ENCODE measurements at regions of chr18 and their contacts with region 1.

Region 1: DNA sequence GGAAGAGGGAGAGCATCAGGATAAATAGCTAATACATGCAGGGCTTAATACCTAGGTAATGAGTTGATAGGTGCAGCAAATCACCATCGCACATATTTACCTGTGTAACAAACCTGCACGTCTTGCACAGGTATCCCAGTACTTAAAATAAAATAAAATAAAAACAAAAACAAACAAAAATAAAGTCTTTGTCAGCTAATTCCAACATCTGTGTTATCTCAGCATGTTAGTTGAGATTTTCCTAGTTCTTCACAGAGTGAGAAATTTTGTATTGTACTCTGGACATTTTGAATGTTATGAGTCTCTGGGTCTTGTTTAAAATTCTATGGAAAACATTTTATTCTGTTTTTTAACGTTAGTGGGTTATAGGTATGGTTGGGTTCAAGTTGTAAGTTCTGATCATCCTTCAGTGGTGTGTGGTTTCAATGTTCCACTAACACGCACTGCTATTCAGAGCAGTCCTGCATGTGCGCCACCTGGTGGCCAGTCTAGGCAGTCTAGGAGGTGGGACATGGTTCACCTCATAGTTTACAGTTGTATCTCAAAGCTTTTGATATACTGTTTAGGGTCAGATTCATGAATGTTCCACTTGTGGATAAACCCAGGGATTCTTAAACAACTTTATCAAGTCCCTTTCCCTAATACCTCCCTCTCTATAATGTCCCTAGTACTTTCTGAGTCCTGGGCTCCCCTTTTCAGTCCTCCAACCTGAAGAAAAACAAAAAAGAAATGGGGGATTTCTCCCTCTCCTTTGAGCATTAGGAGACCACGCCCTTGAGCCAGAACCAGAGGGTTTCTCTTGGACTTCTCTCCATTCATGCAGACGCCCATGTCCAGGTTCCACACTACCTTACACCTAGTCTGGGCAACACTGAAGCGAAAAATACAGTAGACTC is 213.4 kb upstream of the GATA6 start:
- DNase-seq: peak; percentile 42
- ATAC-seq: peak; percentile 100
- H3K4me3 ChIP-seq: no peak overlapping the region
- H3K27ac ChIP-seq: no peak overlapping the region
- H3K4me1 ChIP-seq: no peaks in the 10 kb centered on the region
- H3K27me3 ChIP-seq: no peaks in the 10 kb centered on the region
- CTCF ChIP-seq: peak; percentile 52 to 98 (median 97); a peak in 5 of 6 replicates
- POLR2A ChIP-seq: no peak
- RAD21 ChIP-seq: peak; percentile 55

Region 2: GRCh38 chr18:21191596-21192307 is 764.3 kb before region 1 on chr18:
- CTCF ChIA-PET with region 1: interaction called, 4 read pairs
- POLR2A ChIA-PET with region 1: no interaction called
- RAD21 ChIA-PET with region 1: no interaction called
- intact Hi-C with region 1: loop called (anchors 1 kb)
- DNase-seq: peak; percentile 57
- ATAC-seq: peak; percentile 92
- H3K4me3 ChIP-seq: no peak overlapping the region
- H3K27ac ChIP-seq: no peak overlapping the region
- H3K4me1 ChIP-seq: peaks cover 0 to 16% of the 10 kb centered on the region in 2 experiments; a peak in 2 of 4 replicates
- H3K27me3 ChIP-seq: no peaks in the 10 kb centered on the region
- CTCF ChIP-seq: peak; percentile 72 to 91 (median 77)
- POLR2A ChIP-seq: no peak
- RAD21 ChIP-seq: peak; percentile 71

Region 3: DNA sequence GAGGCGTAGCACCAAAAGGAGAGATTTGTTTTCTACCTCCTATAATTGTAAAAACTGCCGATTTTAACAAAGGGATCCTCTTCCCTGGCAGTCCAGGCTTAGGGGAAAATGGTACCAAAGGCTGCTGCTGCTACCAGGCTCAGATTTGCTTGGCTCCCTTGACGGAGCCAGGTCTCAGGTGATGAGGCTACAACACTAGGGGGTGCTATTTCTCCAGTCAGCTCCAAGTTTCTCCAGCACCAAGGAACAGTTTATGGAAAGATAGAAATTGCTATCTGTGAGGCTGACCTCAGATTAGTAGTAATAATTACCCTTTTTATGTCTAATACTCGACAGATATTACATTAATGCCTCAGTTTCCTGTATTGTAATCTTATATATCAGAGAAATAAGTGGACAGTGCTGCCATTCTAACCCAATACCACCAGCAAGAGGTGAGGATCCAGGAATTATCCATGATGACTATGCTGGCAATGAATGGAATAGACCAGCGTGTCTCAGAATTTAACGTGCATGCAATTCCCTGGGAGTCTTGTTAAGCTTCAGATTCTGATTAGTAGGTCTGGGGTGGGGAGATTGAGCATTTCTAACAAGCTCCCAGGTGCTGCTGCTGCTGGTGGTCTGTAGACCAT is 466.8 kb before region 1 on chr18:
- CTCF ChIA-PET with region 1: no interaction called
- POLR2A ChIA-PET with region 1: no interaction called
- RAD21 ChIA-PET with region 1: no interaction called
- intact Hi-C with region 1: loop called (anchors 1 kb)
- DNase-seq: peak; percentile 40
- ATAC-seq: peak; percentile 94
- H3K4me3 ChIP-seq: no peak overlapping the region
- H3K27ac ChIP-seq: no peak overlapping the region
- H3K4me1 ChIP-seq: peaks cover 4 to 9% of the 10 kb centered on the region in 2 experiments; a peak in 3 of 4 replicates
- H3K27me3 ChIP-seq: no peaks in the 10 kb centered on the region
- CTCF ChIP-seq: peak; percentile 47 to 90 (median 80); a peak in 5 of 6 replicates
- POLR2A ChIP-seq: no peak
- RAD21 ChIP-seq: peak; percentile 82

Region 4: GRCh38 chr18:21897811-21898210 is 58.2 kb before region 1 on chr18:
- CTCF ChIA-PET with region 1: no interaction called
- POLR2A ChIA-PET with region 1: no interaction called
- RAD21 ChIA-PET with region 1: no interaction called
- intact Hi-C with region 1: loop called (anchors 1 kb)
- DNase-seq: peak; percentile 41
- ATAC-seq: peak; percentile 95
- H3K4me3 ChIP-seq: no peak overlapping the region
- H3K27ac ChIP-seq: no peak overlapping the region
- H3K4me1 ChIP-seq: peaks cover 0 to 4% of the 10 kb centered on the region in 2 experiments; a peak in 1 of 4 replicates
- H3K27me3 ChIP-seq: no peaks in the 10 kb centered on the region
- CTCF ChIP-seq: peak; percentile 45 to 78 (median 75); a peak in 5 of 6 replicates
- POLR2A ChIP-seq: no peak
- RAD21 ChIP-seq: peak; percentile 72

Region 5: GRCh38 chr18:21914739-21915319 is 41.2 kb before region 1 on chr18:
- CTCF ChIA-PET with region 1: no interaction called
- POLR2A ChIA-PET with region 1: no interaction called
- RAD21 ChIA-PET with region 1: no interaction called
- intact Hi-C with region 1: loop called (anchors 1 kb)
- DNase-seq: peak; percentile 59
- ATAC-seq: peak; percentile 95
- H3K4me3 ChIP-seq: no peak overlapping the region
- H3K27ac ChIP-seq: no peak overlapping the region
- H3K4me1 ChIP-seq: no peaks in the 10 kb centered on the region
- H3K27me3 ChIP-seq: no peaks in the 10 kb centered on the region
- CTCF ChIP-seq: peak; percentile 67 to 92 (median 80)
- POLR2A ChIP-seq: no peak
- RAD21 ChIP-seq: peak; percentile 90

Region 6: GRCh38 chr18:21968338-21968737 is 12.3 kb after region 1 on chr18:
- CTCF ChIA-PET with region 1: interaction called, 11 read pairs
- POLR2A ChIA-PET with region 1: interaction called, 3 read pairs
- RAD21 ChIA-PET with region 1: no interaction called
- intact Hi-C with region 1: no loop called
- DNase-seq: no peak
- ATAC-seq: no peak
- H3K4me3 ChIP-seq: no peak overlapping the region
- H3K27ac ChIP-seq: no peak overlapping the region
- H3K4me1 ChIP-seq: no peaks in the 10 kb centered on the region
- H3K27me3 ChIP-seq: no peaks in the 10 kb centered on the region
- CTCF ChIP-seq: no peak
- POLR2A ChIP-seq: no peak
- RAD21 ChIP-seq: no peak

Region 7: DNA sequence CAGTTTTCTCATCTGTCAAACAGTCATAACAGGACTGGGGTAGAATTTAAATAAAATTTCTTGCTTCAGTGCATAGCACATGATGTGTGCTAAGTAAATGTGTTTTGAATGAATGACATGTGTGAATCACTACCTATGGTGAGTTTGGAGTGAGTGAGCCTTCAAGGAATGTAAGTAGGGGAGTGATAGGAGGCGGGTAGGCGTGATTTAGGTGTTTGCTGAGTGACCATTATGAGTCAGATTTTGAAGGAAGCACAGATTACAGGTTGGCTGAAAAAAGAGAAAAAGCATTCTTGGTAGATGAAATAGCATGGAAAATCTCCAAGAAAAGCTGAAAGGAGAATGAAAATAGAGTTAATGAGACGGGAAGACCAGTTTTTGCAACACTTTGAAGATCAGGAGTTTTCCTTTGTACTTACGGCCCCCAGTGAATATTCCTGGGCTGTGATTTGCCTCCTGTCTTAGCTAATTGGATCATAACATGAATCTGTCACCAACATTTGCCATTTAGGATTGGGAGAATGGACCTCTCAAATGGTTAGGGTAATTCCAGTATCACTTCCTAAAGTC is 76.5 kb after region 1 on chr18:
- CTCF ChIA-PET with region 1: no interaction called
- POLR2A ChIA-PET with region 1: no interaction called
- RAD21 ChIA-PET with region 1: no interaction called
- intact Hi-C with region 1: no loop called
- DNase-seq: peak; percentile 88
- ATAC-seq: peak; percentile 97
- H3K4me3 ChIP-seq: no peak overlapping the region
- H3K27ac ChIP-seq: peak overlapping the region; percentile 36; the same call in 1 of the 2 replicates
- H3K4me1 ChIP-seq: peaks cover 14 to 20% of the 10 kb centered on the region in 2 experiments
- H3K27me3 ChIP-seq: no peaks in the 10 kb centered on the region
- CTCF ChIP-seq: no peak
- POLR2A ChIP-seq: peak; percentile 81
- RAD21 ChIP-seq: no peak

Region 8: DNA sequence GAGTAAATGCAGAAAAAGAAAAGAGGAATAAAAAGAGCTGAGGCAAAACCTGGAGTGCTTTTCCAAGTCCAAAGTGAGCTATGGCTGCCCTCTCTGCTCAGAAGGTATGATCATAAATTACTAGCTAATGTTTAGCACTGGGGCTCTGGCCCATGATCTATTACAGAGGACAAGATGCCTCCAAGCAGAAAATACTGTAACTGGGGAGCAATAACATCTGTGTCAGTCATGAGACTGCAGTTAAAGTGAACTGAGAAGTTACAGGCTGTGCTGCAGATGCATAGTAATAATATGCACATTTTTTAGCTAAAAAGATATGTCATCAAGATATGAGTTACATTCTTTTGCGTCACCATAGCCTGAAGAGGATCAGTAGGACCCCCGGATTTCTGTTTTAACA is 767.8 kb after region 1 on chr18:
- CTCF ChIA-PET with region 1: no interaction called
- POLR2A ChIA-PET with region 1: no interaction called
- RAD21 ChIA-PET with region 1: no interaction called
- intact Hi-C with region 1: no loop called
- DNase-seq: no peak
- ATAC-seq: no peak
- H3K4me3 ChIP-seq: no peak overlapping the region
- H3K27ac ChIP-seq: no peak overlapping the region
- H3K4me1 ChIP-seq: no peaks in the 10 kb centered on the region
- H3K27me3 ChIP-seq: no peaks in the 10 kb centered on the region
- CTCF ChIP-seq: no peak
- POLR2A ChIP-seq: no peak
- RAD21 ChIP-seq: no peak